Caco-2 (cell line): ENCODE measurements at regions of chr7 and their contacts with region 1.

Region 1: DNA sequence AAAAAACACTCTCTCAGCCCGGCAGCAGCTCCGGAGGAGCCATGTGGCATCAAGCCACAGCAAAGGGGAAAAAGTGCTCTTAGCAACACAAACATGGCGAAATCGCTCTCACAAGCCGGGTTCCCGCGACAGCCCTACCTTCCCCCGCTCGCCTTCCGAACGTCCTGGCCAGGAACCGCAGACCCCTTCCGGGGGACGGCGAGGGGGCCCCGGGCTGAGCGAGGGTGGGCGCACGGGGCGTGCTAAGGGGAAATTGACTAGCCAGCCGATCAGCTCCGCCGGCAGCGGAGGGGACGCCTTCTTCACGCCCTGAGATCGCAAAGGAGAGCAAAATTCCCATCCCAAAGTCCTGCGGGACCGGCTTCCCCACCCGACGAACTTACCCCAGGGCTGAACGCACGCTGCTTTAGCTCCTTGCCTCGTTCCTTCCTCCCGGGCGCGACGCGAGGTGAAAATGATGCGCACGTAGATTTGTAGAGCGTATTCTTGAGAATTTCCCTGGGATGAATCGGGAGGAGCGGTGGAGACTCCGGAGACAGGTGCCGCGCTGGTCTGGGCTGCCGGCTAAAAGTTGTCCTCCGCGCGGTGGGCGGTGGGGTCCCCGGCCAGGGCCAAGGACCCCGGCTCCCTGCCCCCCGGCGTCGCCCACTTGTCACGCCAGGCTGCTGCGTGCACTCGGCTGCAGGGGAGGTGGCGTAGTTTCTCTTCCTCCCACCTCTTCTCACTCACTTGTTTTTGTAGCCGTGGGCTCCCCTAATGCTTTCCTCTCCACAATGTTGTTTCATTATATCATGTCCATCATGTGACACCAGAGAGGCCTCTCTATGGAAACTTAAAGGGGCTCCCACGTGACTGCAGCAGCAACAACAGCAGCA is 220.1 kb upstream of the MKLN1 start:
- DNase-seq: peak; percentile 49 to 59
- H3K4me3 ChIP-seq: peak overlapping the region; percentile 73
- H3K4me3 Mint-ChIP-seq: peak overlapping the region; percentile 79
- H3K27ac Mint-ChIP-seq: peak overlapping the region; percentile 87
- H3K4me1 ChIP-seq: peaks cover 20% of the 10 kb centered on the region
- H3K4me1 Mint-ChIP-seq: peaks cover 15% of the 10 kb centered on the region
- H3K27me3 ChIP-seq: 0 out of 2 replicates have a peak, but pooled peaks cover 1% of the 10 kb centered on the region
- H3K27me3 Mint-ChIP-seq: peaks cover 7% of the 10 kb centered on the region
- CTCF ChIP-seq: peak in 1 of 2 experiments; percentile 4

Region 2: DNA sequence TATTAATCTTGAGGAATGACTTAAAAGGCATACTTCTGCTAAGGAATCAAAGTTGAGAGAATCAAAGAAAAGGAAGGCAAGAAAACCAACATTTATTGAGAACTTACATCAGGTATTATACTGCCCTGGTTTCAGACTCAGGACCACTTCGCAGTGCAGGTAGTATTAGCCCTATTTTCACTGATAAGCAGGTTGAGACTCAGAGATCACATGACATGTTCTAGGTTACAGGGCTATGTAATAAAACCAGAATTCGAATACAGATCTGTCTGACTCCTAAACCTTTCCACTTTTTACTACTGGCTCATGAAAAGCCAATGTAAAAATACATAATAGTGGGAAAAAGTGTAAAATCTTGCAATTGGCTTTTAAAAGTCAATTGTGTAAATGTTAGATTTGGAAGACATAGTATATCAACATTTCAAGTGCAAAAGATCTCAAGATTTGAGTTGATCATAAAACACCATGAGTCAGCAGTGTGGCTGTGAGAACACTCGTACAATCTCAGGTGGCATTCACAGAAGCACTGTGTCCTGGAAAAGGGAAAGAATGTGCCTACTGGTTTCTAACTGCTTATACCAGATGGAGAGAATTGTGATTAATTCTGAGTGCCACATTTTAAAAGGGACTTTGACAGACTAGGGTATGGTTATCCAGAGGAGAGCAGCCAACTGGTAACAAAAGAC is 24.3 kb after region 1 on chr7:
- CTCF ChIA-PET with region 1: no interaction called
- POLR2A ChIA-PET with region 1: no interaction called
- intact Hi-C with region 1: no loop called
- DNase-seq: no peak
- H3K4me3 ChIP-seq: no peak overlapping the region
- H3K4me3 Mint-ChIP-seq: no peak overlapping the region
- H3K27ac Mint-ChIP-seq: no peak overlapping the region
- H3K4me1 ChIP-seq: no peaks in the 10 kb centered on the region
- H3K4me1 Mint-ChIP-seq: no peaks in the 10 kb centered on the region
- H3K27me3 ChIP-seq: no peaks in the 10 kb centered on the region
- H3K27me3 Mint-ChIP-seq: no peaks in the 10 kb centered on the region
- CTCF ChIP-seq: no peak

Region 3: DNA sequence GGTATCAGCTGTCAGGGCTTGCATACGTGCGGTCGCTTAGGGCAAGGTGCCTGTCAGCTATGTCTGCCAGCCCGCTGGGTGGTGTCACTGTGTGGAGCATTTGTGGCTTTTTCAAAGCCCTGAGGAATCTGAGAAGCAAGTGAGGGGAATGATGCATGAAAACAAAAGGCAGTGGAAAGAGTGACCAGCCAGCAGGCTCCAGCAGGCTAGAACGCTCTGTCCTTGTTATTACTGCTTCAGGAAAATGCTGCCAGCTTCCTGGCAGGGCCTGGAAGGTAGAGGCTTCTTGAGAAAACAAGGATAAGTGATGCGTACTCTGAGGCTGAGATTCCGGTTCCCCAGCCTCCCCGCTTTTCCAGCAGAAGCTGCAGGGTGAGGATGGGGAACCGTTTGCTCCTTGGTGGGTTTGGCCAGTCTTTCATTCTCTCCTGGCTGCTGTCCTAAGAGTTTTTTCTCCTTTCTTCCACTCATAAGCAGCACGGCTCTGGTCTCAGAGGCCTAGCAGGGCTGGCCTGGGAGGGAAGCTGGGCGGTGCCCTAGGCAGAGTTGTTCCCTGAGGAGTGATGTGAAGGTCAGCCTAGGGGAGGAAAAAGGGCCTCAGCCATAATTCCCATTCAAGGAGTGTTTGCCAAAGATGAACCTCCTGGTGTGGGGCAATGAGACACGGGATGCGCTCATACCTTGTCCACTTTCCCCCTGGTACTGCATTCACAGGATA is 177.3 kb after region 1 on chr7:
- CTCF ChIA-PET with region 1: no interaction called
- POLR2A ChIA-PET with region 1: no interaction called
- intact Hi-C with region 1: no loop called
- DNase-seq: no peak
- H3K4me3 ChIP-seq: no peak overlapping the region
- H3K4me3 Mint-ChIP-seq: no peak overlapping the region
- H3K27ac Mint-ChIP-seq: no peak overlapping the region
- H3K4me1 ChIP-seq: no peaks in the 10 kb centered on the region
- H3K4me1 Mint-ChIP-seq: no peaks in the 10 kb centered on the region
- H3K27me3 ChIP-seq: no peaks in the 10 kb centered on the region
- H3K27me3 Mint-ChIP-seq: no peaks in the 10 kb centered on the region
- CTCF ChIP-seq: no peak

Region 4: GRCh38 chr7:131424219-131424822 is 316.7 kb after region 1 on chr7:
- CTCF ChIA-PET with region 1: no interaction called
- POLR2A ChIA-PET with region 1: no interaction called
- intact Hi-C with region 1: loop called (anchors 10 kb)
- DNase-seq: no peak
- H3K4me3 ChIP-seq: no peak overlapping the region
- H3K4me3 Mint-ChIP-seq: no peak overlapping the region
- H3K27ac Mint-ChIP-seq: no peak overlapping the region
- H3K4me1 ChIP-seq: no peaks in the 10 kb centered on the region
- H3K4me1 Mint-ChIP-seq: peaks cover 12% of the 10 kb centered on the region
- H3K27me3 ChIP-seq: no peaks in the 10 kb centered on the region
- H3K27me3 Mint-ChIP-seq: no peaks in the 10 kb centered on the region
- CTCF ChIP-seq: peak; percentile 41 to 51

Region 5: DNA sequence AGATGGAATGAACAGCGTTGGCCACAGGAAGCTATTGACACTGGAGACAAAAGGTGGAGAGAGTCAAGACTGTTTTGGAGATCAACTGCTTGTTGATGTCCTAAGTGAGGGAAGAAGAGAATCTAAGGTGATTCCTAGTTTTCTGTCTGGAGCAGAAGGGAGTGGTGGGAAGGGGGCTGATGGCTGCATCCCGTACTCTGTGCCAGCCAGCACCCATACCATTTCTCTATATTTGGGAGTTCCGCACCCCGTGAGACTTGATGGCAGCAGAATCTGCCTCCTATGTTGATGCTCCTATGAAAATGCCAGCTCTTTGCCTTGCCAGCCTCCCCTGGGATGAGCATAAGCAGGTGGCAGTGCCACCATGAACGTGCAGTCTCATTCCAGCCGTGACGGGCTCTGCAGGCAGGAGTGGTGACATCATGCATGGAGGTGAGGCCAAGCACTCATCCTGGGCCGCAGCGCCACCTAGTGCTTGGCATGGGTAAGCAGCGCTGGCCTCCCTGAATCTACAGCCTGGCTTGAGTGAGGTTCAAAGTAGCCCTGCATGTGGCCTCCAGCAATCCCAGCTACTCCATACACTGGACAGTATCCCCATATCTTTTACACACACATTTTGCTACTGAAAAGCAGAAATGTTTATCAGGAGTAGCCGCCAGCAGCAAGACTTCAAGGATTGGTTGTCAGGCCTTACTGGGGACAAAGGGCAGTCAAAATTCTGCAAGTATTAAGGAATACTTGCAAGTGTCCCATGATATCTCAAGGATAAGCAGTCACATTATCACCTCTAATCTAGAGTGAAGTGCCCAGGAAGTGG is 405.9 kb after region 1 on chr7:
- CTCF ChIA-PET with region 1: no interaction called
- POLR2A ChIA-PET with region 1: no interaction called
- intact Hi-C with region 1: no loop called
- DNase-seq: peak; percentile 85 to 88
- H3K4me3 ChIP-seq: no peak overlapping the region
- H3K4me3 Mint-ChIP-seq: no peak overlapping the region
- H3K27ac Mint-ChIP-seq: peak overlapping the region; percentile 4
- H3K4me1 ChIP-seq: peaks cover 19% of the 10 kb centered on the region
- H3K4me1 Mint-ChIP-seq: peaks cover 45% of the 10 kb centered on the region
- H3K27me3 ChIP-seq: no peaks in the 10 kb centered on the region
- H3K27me3 Mint-ChIP-seq: no peaks in the 10 kb centered on the region
- CTCF ChIP-seq: peak; percentile 93 to 95